ENCODE measurements at regions of chr1 and their contacts with region 1.

Region 1: DNA sequence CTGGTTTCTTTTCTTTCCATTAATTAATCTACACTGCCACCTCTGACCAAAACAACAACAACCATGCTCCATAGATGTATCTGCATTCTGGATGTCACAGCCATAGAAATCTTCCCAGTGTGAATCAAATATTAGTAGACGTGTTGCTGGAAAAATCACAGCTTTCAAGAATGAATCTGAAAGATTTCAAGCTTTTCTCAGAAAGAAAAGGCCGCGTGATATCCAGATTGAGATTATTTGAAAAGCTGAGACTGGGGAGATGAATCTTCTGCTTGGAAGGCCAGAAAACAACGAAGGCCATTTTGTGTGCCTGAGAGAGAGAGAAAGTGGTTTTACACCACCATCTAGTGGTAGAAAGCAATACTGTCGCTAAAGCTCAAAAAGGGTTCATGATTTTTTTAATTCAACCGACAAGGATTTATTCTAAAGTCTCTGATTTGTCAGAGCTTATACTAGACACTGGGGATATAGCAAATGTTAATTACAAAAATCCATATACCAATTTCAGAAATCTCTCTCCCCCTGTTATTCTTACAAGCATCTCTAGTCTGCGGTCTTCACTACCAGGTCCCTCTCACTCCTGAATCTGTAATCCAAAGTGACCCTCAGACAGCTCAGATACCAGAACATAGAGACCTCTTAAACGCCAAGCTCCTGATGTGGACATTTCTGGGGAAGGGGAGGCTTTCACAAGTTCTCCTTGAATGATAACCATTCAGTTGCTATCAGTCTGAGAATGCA is 87.5 kb upstream of the SGIP1 start:
- DNase-seq: no peak
- ATAC-seq: peak; percentile 84 to 87
- H3K4me3 ChIP-seq: no peak overlapping the region
- H3K27ac ChIP-seq: peak overlapping the region in 3 of 4 donors; percentile 36 to 42 (median 39)
- H3K4me1 ChIP-seq: peaks cover 19 to 21% of the 10 kb centered on the region in 2 donors
- H3K27me3 ChIP-seq: no peaks in the 10 kb centered on the region
- CTCF ChIP-seq: peak; percentile 87 to 96 (median 92)
- POLR2A ChIP-seq: no peak

Region 2: DNA sequence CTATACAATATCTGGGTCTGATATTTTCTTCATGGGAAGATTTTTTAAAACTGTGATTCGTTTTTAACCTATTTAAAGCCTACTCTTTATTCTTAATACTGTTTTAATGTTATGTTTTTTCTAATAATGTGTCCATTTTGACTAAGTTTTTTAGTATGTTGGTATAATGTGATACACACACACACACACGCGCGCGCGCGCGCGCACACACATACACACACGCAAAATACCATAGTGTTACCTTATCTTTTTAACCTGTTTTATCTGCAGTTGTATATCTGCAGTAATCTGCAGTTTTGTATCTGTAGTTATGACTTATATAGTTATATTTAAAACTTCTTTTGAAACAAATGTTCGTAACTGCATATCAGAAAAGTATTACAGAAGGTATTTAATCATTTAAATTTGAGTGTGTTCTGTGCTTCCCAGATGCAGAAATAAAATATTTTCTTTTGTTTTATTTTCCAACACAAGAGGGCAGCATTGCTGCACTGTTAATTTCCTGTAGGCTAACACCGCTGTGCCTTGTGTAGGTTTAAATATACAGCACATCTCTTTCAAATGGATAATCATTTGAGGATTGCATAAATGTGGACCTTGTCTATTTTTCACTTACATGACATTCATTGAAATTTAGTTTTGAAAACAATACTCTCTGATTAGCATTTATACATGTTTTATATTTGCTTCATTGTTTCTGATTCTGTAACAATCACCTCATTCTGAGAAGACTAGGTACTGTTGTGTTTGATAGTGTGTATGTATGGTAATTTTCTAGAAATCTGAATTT is 487.7 kb before region 1 on chr1:
- in situ Hi-C with region 1: loop called in 3 of 4 experiments (anchors 5 to 25 kb)
- intact Hi-C with region 1: loop called (anchors 1 kb)
- DNase-seq: no peak
- ATAC-seq: peak in 1 of 2 donors; percentile 52
- H3K4me3 ChIP-seq: no peak overlapping the region
- H3K27ac ChIP-seq: no peak overlapping the region
- H3K4me1 ChIP-seq: no peaks in the 10 kb centered on the region
- H3K27me3 ChIP-seq: no peaks in the 10 kb centered on the region
- CTCF ChIP-seq: peak; percentile 63 to 78 (median 68)
- POLR2A ChIP-seq: no peak

Region 3: DNA sequence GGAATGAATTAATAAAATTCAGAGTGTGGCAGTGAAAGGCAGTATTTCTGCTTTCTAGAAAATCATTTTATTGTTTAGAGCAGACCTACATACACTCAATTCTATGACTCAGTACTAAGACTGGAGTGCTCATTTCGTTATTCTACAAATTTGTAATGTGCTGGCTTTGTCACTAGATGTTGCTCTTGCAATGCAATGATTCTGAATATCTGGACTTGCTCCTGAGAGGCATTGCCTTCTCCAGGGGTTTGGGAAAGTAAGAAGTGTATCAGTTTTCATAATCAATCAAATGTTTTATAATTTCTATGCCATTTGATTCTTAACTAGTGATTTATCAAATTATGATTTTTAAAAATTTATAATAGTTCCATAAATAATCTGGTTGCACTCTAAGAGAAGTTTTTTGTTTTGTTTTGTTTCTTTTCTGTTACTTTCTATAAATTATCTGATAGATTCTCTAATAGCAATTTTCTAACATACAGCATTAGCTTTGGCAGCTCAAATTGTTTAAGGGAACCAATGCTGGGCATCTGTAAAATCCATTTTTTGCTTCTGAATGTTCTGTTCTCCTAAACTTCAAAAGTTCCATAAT is 193.0 kb before region 1 on chr1:
- in situ Hi-C with region 1: loop called (anchors 5 kb)
- intact Hi-C with region 1: loop called (anchors 1 kb)
- DNase-seq: no peak
- ATAC-seq: peak; percentile 89 to 93
- H3K4me3 ChIP-seq: no peak overlapping the region
- H3K27ac ChIP-seq: no peak overlapping the region
- H3K4me1 ChIP-seq: peaks cover 0 to 19% of the 10 kb centered on the region in 2 donors
- H3K27me3 ChIP-seq: no peaks in the 10 kb centered on the region
- CTCF ChIP-seq: peak; percentile 61 to 88 (median 71)
- POLR2A ChIP-seq: no peak

Region 4: GRCh38 chr1:66258404-66259105 is 187.9 kb before region 1 on chr1:
- in situ Hi-C with region 1: loop called (anchors 5 kb)
- intact Hi-C with region 1: loop called (anchors 1 kb)
- DNase-seq: no peak
- ATAC-seq: no peak
- H3K4me3 ChIP-seq: no peak overlapping the region
- H3K27ac ChIP-seq: peak overlapping the region in 2 of 4 donors; percentile 10 to 11
- H3K4me1 ChIP-seq: peaks cover 9 to 37% of the 10 kb centered on the region in 2 donors
- H3K27me3 ChIP-seq: no peaks in the 10 kb centered on the region
- CTCF ChIP-seq: no peak
- POLR2A ChIP-seq: no peak

Region 5: DNA sequence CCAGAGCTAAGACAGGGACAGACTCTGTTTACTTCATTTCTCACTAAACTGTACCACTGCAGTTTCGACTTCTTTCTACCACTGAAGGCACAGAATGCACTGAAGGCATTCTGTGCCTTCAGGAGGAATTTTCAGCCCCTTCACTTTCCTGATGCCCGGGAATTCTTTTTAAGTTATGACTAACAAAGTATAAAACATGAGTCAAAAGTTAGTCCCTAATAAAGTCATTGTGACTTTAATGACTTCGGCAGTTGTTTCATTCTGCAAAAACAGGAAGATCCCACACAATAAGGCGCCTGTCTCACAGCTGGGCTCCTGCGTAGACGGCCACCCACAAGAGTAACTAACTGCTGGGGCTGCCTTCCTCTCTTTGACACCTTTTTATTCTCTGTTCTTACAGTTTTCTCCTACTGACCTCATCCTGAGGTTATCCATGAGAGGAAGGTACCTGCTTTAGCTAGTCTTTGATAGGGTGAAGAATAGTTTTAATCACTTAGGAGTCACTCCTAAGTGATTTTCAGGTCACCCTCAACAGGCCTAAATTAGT is 96.4 kb before region 1 on chr1:
- in situ Hi-C with region 1: no loop called
- intact Hi-C with region 1: loop called (anchors 5 kb)
- DNase-seq: peak in 1 of 2 donors; percentile 27
- ATAC-seq: peak; percentile 40 to 44
- H3K4me3 ChIP-seq: peak overlapping the region; percentile 2 to 36 (median 26)
- H3K27ac ChIP-seq: peak overlapping the region; percentile 70 to 83 (median 78)
- H3K4me1 ChIP-seq: peaks cover 88 to 100% of the 10 kb centered on the region in 2 donors
- H3K27me3 ChIP-seq: no peaks in the 10 kb centered on the region
- CTCF ChIP-seq: no peak
- POLR2A ChIP-seq: no peak

Region 6: GRCh38 chr1:66396212-66396890 is 50.1 kb before region 1 on chr1:
- in situ Hi-C with region 1: no loop called
- intact Hi-C with region 1: no loop called
- DNase-seq: no peak
- ATAC-seq: peak; percentile 51 to 65
- H3K4me3 ChIP-seq: no peak overlapping the region
- H3K27ac ChIP-seq: peak overlapping the region in 2 of 4 donors; percentile 26 to 28
- H3K4me1 ChIP-seq: no peaks in the 10 kb centered on the region
- H3K27me3 ChIP-seq: no peaks in the 10 kb centered on the region
- CTCF ChIP-seq: no peak
- POLR2A ChIP-seq: no peak

Region 7: GRCh38 chr1:66598670-66599069 is 152.2 kb after region 1 on chr1:
- in situ Hi-C with region 1: no loop called
- intact Hi-C with region 1: no loop called
- DNase-seq: no peak
- ATAC-seq: no peak
- H3K4me3 ChIP-seq: no peak overlapping the region
- H3K27ac ChIP-seq: no peak overlapping the region
- H3K4me1 ChIP-seq: peaks cover 0 to 3% of the 10 kb centered on the region in 2 donors
- H3K27me3 ChIP-seq: no peaks in the 10 kb centered on the region
- CTCF ChIP-seq: no peak
- POLR2A ChIP-seq: no peak

Measured in gastrocnemius medialis (tissue), 4 donors.